ENCODE measurements at regions of chr17 and their contacts with region 1.

Region 1: DNA sequence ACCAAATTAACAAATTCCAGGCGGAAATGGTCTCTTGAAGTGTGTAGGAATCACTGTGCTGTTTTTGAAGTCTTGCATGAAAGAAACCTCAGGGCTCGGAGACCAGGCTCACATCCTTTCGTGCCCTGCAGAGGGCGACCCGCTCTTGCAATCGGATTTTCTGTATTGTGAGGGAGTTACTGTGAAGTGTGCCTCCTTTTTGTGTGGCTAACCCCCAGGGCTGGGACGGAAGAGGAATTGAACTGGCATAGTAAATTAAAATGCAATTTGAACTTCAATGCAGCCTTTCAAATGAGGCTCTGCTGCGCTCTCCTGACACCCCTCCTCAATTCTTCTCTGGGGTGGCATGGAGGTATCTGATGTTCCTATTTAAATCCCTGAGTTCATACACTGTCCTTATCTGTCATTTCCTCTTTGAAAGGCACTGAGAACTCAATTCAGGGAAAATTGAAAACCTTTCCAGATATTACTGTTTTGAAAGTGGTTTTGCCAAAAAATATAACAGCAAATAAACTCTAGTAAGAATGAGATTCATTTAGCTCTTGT is 51.5 kb upstream of the MGAT5B start:
- DNase-seq: peak; percentile 94
- H3K4me3 ChIP-seq: no peak overlapping the region
- H3K27ac ChIP-seq: peak overlapping the region; percentile 31
- H3K4me1 ChIP-seq: peaks cover 41% of the 10 kb centered on the region
- CTCF ChIP-seq: peak; percentile 100

Region 2: DNA sequence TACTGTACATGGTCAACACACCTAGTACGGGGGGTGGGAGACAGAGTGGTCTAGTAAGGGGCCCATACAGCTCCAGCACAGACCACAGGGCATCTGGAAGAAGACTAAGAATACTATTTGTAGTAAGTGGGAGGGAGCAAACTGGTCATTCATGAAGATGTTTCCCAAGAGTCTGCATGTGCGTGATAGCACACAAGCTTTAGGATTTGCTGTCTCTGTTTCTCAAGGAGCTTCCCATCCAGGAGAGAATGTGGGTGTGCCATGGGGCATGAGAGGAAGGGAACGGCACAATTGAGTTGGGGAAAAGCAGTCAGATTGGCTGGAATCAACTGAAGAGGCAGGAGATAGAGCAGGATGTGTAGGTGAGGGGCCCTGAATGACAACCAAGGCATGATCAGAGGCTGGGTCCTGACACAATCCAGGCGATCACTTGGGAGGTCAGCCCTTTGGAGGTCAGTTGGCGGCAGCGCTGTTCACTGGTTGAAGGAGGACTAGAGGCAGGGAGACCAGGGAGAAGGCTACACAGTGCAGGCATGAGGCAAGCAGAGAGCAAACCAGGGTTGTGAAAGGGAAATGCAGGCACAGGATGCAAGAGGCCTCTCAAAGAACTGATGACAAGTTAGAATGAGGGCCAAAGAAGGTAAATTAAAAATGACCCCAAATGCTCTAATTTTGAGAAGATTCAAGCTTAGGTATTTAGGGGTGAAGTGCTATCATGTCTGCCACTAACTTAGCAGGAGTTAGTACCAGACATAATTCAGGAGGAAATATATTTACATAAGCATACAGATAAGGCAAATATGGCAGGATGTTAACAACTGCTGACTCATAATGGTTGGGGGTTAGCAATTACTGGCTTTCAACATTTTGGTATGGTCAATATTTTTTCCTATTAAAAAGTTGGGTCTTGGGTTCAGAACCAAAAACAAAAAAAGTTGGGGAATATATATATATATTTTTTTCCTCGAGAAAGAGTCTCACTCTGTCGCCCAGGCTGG is 374.0 kb before region 1 on chr17:
- CTCF ChIA-PET with region 1: no interaction called
- POLR2A ChIA-PET with region 1: no interaction called
- intact Hi-C with region 1: no loop called
- DNase-seq: no peak
- H3K4me3 ChIP-seq: peak overlapping the region; percentile 1
- H3K27ac ChIP-seq: peak overlapping the region; percentile 11
- H3K4me1 ChIP-seq: peaks cover 100% of the 10 kb centered on the region
- CTCF ChIP-seq: no peak

Region 3: DNA sequence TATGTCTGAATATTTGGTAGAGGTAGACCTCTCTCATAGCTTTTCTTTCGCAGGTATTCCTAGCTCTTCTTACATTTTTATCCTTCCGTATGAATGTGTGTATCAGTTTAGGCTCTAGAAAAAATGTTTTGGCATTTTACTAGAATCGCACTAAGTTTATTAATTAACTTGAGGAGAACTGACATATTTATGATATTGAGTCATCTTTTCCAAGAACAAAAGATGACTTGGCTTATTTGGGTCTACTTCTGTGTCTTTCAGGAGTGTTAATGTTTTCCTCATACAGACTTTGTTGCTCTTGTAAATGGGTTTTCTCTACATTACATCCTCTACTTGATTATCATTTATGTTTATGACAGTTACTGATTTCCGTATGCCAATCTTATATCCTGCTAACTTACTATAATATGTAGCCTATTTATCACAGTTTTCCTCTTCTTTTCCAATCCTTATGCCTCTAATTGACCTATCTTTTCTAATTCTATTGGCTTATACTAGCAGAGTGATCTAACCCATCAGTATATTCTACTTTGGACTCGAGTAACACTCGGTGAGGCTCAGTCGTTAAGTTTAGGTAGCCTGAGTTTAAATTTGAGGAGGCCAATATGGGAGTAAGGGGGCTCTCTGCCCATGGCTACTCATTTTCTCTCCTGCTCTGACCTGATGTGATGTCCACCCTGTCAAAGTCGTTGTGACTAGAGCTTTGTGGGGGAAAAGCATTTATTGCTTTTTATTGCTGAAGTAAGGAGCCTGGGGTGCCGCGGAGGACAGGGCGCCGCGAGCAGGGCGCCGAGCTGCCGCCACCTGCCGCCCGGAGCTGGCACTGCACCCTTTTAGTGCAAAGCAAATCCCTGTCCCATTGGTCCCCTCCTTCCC is 193.2 kb before region 1 on chr17:
- CTCF ChIA-PET with region 1: no interaction called
- POLR2A ChIA-PET with region 1: no interaction called
- intact Hi-C with region 1: no loop called
- DNase-seq: peak; percentile 75
- H3K4me3 ChIP-seq: no peak overlapping the region
- H3K27ac ChIP-seq: no peak overlapping the region
- H3K4me1 ChIP-seq: peaks cover 4% of the 10 kb centered on the region
- CTCF ChIP-seq: peak; percentile 99

Region 4: DNA sequence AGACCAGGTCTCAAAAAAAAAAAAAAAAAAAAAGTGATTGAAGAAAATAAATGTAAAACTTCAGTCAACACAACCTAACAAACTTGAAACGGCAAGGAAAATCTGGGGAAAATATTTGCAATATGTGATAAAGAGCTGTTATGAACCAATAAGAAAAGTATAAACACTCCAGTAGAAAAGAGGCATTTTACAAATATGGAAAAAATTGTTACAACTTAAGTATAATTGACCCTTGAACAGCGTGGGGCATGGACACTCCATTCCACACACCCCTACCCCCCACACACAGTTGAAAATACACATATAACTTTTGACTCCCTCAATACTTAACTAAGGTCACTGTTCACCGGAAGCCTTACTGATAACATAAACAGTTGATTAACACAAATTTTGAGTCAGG is 58.1 kb before region 1 on chr17:
- CTCF ChIA-PET with region 1: no interaction called
- POLR2A ChIA-PET with region 1: no interaction called
- intact Hi-C with region 1: no loop called
- DNase-seq: no peak
- H3K4me3 ChIP-seq: no peak overlapping the region
- H3K27ac ChIP-seq: no peak overlapping the region
- H3K4me1 ChIP-seq: peaks cover 3% of the 10 kb centered on the region
- CTCF ChIP-seq: no peak

Region 5: GRCh38 chr17:76868176-76868668 is 51.6 kb after region 1 on chr17 and contains the start of gene MGAT5B:
- CTCF ChIA-PET with region 1: interaction called, 4 read pairs
- POLR2A ChIA-PET with region 1: no interaction called
- intact Hi-C with region 1: loop called (anchors 1 kb)
- DNase-seq: peak; percentile 94
- H3K4me3 ChIP-seq: peak within 1 kb of the TSS; percentile 58
- H3K27ac ChIP-seq: no peak within 1 kb of the TSS
- H3K4me1 ChIP-seq: peaks cover 21% of the 10 kb centered on the region
- CTCF ChIP-seq: peak; percentile 85
- total RNA-seq, gene MGAT5B: 1.3 and 2.5 TPM in 2 replicates

Region 6: GRCh38 chr17:76909971-76910760 is 93.5 kb after region 1 on chr17:
- CTCF ChIA-PET with region 1: no interaction called
- POLR2A ChIA-PET with region 1: no interaction called
- intact Hi-C with region 1: no loop called
- DNase-seq: peak; percentile 49
- H3K4me3 ChIP-seq: no peak overlapping the region
- H3K27ac ChIP-seq: no peak overlapping the region
- H3K4me1 ChIP-seq: no peaks in the 10 kb centered on the region
- CTCF ChIP-seq: no peak

Region 7: GRCh38 chr17:76940738-76941350 is 124.2 kb after region 1 on chr17:
- CTCF ChIA-PET with region 1: no interaction called
- POLR2A ChIA-PET with region 1: no interaction called
- intact Hi-C with region 1: loop called (anchors 2 kb)
- DNase-seq: peak; percentile 58
- H3K4me3 ChIP-seq: no peak overlapping the region
- H3K27ac ChIP-seq: no peak overlapping the region
- H3K4me1 ChIP-seq: no peaks in the 10 kb centered on the region
- CTCF ChIP-seq: peak; percentile 79

Region 8: GRCh38 chr17:77054936-77055335 is 238.3 kb after region 1 on chr17:
- CTCF ChIA-PET with region 1: no interaction called
- POLR2A ChIA-PET with region 1: no interaction called
- intact Hi-C with region 1: loop called (anchors 1 kb)
- DNase-seq: no peak
- H3K4me3 ChIP-seq: no peak overlapping the region
- H3K27ac ChIP-seq: no peak overlapping the region
- H3K4me1 ChIP-seq: peaks cover 6% of the 10 kb centered on the region
- CTCF ChIP-seq: no peak

Measured in OCI-LY7 (cell line).